MCF 10A (cell line): ENCODE measurements at regions of chr6 and their contacts with region 1.

Region 1: DNA sequence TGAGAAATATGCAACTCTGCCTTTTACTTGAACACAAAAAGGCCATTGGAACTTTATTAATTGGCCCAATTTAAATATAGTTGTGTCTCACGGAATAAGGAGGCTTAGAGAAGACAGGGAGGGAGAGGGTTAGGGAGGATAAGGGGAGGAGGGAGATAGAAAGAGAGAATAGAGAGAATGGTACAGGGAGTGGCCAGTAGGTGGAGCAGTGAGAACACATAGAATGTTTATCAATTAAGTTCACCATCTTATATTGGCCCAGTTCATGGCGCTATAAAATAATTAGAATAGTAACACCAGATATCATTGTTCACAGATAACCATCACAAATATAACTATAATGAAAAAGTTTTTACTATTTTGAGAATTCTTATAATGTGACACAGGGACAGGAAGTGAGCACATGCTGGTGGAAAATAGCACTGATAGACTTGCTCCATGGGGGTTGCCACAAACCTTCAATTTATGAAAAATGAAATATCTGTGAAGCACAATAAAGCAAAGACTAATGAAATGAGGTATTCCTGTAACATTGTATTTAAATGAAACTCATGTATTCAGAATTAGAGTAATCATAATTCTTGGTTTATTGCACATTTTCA is 374.1 kb upstream of the MANEA start:
- DNase-seq: peak; percentile 52
- H3K4me3 Mint-ChIP-seq: no peak overlapping the region
- H3K27ac Mint-ChIP-seq: no peak overlapping the region
- H3K4me1 Mint-ChIP-seq: no peaks in the 10 kb centered on the region
- H3K27me3 Mint-ChIP-seq: peaks cover 63% of the 10 kb centered on the region
- CTCF ChIP-seq: peak; percentile 68

Region 2: DNA sequence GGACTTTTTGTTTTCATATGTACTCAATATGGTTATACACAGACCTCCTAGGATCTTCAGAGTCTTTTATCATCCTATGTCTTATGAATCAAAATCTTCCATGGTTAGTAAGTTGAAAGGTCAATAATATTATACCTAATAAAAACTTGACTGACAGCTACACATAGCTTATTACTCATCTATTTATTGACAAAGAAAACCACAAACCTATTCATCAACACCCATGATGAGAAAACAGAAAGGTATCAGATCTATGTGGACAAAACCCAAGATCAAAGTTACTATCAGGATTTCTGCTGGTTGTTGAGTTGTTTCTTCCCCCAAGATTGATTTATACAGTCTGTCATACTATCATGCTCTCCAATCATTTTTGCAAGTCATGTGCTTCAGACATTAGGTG is 86.0 kb before region 1 on chr6:
- CTCF ChIA-PET with region 1: no interaction called
- POLR2A ChIA-PET with region 1: no interaction called
- intact Hi-C with region 1: no loop called
- DNase-seq: no peak
- H3K4me3 Mint-ChIP-seq: no peak overlapping the region
- H3K27ac Mint-ChIP-seq: no peak overlapping the region
- H3K4me1 Mint-ChIP-seq: no peaks in the 10 kb centered on the region
- H3K27me3 Mint-ChIP-seq: no peaks in the 10 kb centered on the region
- CTCF ChIP-seq: no peak

Region 3: GRCh38 chr6:95133578-95133977 is 69.7 kb before region 1 on chr6:
- CTCF ChIA-PET with region 1: no interaction called
- POLR2A ChIA-PET with region 1: no interaction called
- intact Hi-C with region 1: no loop called
- DNase-seq: peak; percentile 22
- H3K4me3 Mint-ChIP-seq: no peak overlapping the region
- H3K27ac Mint-ChIP-seq: no peak overlapping the region
- H3K4me1 Mint-ChIP-seq: no peaks in the 10 kb centered on the region
- H3K27me3 Mint-ChIP-seq: peaks cover 58% of the 10 kb centered on the region
- CTCF ChIP-seq: peak; percentile 61

Region 4: GRCh38 chr6:95280690-95281273 is 77.5 kb after region 1 on chr6:
- CTCF ChIA-PET with region 1: interaction called, 8 read pairs
- POLR2A ChIA-PET with region 1: no interaction called
- intact Hi-C with region 1: loop called (anchors 1 kb)
- DNase-seq: peak; percentile 26
- H3K4me3 Mint-ChIP-seq: no peak overlapping the region
- H3K27ac Mint-ChIP-seq: no peak overlapping the region
- H3K4me1 Mint-ChIP-seq: no peaks in the 10 kb centered on the region
- H3K27me3 Mint-ChIP-seq: peaks cover 73% of the 10 kb centered on the region
- CTCF ChIP-seq: no peak

Region 5: DNA sequence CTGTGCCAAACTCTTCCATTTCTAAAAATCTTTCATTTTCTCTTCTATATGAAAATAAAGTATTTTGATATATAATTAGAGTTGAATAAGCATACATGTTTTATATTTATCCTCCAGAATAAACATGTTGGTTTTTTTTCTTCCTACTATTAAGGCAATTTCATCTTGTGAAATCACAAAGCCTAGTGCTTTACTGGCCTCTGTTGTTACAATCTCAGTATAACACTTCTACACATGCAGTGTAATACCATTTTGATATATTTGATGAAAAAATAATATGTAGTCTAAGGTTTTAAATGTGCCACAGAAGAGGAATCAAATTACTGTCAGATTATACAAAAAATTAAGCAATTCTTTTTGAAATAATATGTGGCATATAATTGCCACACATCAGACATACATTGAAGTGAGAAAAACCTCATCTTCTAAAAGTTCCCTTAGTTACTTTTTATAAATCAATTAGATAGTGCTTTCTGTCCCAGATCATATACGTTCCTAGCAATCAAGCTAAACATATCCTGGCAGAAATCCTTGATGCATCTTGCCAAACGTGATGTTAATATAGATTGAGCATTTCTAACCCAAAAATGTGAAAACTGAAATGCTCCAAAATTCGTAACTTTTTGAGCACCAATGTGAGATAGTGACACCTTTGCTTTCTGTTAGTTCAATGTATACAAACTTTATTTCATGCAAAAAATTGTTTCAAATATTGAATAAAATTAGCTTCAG is 149.0 kb after region 1 on chr6:
- CTCF ChIA-PET with region 1: no interaction called
- POLR2A ChIA-PET with region 1: no interaction called
- intact Hi-C with region 1: loop called (anchors 1 kb)
- DNase-seq: no peak
- H3K4me3 Mint-ChIP-seq: no peak overlapping the region
- H3K27ac Mint-ChIP-seq: no peak overlapping the region
- H3K4me1 Mint-ChIP-seq: no peaks in the 10 kb centered on the region
- H3K27me3 Mint-ChIP-seq: peaks cover 50% of the 10 kb centered on the region
- CTCF ChIP-seq: peak; percentile 22